ENCODE measurements at regions of chr14 and their contacts with region 1.

Region 1: DNA sequence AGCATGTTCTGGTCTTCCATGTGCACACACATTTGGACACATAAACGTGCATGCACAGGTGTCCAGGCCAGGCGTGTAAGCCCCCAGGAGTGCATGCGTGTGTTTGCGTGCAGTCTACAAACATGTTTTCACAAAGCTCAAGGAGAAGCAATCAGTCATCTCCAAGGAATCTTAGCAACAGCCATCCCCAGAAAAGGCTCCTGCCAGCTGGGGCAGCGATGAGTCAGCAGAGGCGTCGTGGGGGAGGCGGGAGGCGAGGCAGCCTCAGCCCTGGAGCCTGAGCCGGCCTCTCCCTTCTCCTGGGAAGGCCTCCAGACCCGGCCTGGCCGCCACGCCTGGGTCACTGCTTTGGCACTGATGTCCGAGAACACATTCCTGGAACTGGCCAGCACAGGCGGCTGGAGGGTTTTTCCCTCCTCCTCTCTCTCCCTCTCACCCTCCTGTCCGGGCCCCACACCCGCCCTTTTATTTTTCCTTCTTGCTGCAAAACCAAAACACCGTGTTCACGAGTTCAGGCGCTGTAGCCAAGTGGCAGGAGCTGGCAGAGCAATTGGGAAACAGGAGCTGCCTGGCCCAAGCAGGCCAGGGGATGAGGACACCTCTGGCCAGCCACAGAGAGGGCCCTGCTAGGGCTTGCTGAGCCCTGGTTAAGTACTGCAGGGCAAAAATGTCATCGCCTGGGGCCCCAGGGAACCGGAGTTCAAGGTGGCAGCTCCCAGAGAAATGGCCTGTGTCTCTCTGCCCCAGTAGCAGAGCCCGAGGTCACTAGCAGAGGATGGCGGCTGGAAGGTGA is 92.7 kb downstream of the LRRC74A start:
- DNase-seq: peak; percentile 97
- ATAC-seq: peak; percentile 84 to 92

Region 2: GRCh38 chr14:76882651-76883050 is 36.3 kb before region 1 on chr14:
- intact Hi-C with region 1: loop called in 1 of 2 experiments (anchors 2 kb)
- DNase-seq: no peak
- ATAC-seq: peak; percentile 10 to 17

Region 3: DNA sequence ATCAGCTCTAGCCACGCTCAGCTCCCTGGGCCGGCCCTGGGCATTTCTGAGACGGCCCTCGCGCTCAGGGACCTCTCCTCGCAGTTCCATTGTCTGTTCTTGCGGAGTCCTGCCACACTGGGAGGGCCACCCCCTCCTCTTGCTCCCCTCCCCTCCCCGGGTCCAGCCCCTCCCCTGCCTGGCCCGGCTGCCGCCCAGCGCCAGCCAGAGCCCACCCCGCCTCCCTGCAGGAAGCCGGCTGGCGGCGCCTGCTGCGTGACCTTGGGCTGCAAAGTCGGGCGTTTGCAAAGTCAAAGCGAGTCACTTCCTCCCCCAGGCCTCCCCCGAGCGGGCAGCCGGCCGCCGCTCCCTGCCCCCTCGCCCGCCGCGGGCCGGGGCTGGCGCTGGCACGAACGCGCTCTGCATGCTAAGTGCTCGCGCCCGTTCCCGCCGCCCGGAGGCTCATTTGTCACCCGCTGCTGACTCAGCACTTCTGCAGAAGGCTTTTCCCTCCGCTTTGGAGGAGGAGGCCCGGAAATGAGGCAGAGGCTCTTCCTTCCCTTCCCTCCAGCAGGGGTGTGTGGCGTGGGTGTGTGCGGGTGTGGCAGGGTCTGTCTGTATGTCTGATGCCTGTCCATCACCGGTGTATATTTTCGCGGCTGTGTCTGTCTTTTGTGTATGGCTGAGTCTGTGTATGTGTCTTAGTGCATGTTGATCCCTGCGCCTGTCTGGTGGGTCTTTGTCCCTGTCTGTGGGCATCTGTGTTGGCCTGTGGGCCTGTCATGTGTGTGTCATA is 37.6 kb after region 1 on chr14:
- intact Hi-C with region 1: loop called in 1 of 2 experiments (anchors 5 kb)
- DNase-seq: peak; percentile 92
- ATAC-seq: peak; percentile 76 to 85

Region 4: GRCh38 chr14:76997256-76997970 is 78.5 kb after region 1 on chr14:
- intact Hi-C with region 1: no loop called
- DNase-seq: no peak
- ATAC-seq: no peak

Region 5: DNA sequence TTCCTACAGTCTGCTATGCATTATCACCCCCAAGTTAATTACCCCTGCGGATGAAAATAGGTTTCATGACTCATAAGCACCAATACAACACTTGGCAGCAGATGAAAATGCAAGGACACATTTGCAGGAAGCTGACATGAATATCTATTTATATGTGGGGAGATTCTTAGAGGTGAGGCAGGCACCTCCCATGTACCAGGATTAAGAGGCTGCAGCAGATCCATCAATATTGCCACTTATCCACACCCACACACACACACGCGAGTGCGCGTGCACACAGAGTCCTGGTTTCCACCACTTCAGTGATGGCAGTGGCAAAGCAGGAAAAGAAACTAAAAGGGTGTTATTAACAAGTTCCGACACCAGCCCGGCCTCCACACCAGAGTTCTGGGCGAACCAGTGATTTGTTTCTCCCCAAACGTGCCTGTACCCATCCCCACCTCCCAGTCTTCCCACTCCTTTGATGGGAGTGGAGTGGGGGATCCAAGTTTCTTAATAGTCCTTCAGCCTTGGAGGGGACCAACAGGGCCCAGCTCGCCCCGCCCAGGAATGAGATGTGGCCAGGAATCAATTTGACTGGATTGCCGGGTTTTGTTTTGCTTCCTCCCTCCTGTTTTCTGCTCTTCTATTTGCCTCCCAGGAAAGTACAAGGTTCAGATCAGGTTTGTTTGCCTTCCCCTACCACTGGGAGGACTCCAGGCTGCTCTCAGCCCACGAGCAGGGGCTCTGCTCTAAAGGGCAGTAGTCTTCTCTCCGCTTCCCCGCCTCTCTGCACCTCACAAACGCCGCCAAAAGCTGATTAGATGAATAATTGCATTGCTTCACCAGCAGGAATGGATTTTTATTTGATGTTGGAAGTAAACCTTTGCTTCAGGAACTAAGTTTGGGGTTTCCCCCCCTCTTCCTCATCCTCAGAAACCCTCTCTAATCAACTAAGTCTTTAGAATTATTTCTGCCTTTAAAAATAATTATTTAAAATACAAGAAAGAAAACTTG is 104.4 kb after region 1 on chr14:
- intact Hi-C with region 1: loop called (anchors 1 to 10 kb)
- DNase-seq: no peak
- ATAC-seq: peak in 1 of 2 donors; percentile 13

Region 6: GRCh38 chr14:77028384-77029231 is 109.7 kb after region 1 on chr14 and contains the start of gene IRF2BPL:
- intact Hi-C with region 1: loop called (anchors 1 to 10 kb)
- DNase-seq: peak; percentile 99
- ATAC-seq: peak; percentile 67 to 77
- total RNA-seq, gene IRF2BPL: 41.4 to 47.5 TPM

Region 7: DNA sequence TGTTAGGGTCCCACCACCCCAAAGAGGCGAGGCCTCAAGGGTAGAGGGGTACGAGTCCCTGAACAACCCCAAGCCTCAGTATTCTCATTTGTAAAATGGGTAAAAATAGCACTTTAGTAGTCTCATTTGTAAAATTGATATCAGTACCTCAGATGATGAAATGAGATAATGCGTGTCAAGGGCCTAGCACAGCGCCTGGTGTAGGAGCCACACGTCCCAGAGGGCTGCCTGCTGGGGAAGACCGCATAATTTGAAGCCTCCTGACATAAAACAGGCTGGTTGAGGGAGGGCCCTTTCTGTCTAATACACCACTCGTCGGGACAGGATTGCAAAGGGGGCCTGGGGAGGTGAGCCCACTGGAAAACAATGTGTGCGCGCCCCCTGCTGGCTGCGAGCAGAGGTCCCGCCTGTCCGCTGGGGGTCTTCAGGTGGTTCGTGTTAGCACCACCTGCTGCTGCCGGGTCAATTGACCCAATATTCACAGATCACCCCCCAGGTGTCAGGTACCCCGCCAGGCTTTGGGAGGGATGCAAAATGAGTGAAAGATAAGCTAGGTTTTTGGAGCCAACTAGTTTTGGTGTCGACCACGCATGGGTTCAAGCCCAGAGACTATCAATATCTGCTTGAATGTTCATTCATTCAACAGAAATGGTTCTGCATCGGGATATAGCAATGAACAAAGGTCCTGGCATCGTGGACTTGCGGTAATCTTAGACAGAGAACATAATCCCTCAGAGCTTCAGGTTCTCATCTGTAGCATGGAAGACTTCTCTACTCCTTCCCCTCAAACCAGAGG is 134.3 kb after region 1 on chr14:
- intact Hi-C with region 1: loop called in 1 of 2 experiments (anchors 2 kb)
- DNase-seq: peak; percentile 87
- ATAC-seq: peak; percentile 64 to 72